Esophagus muscularis mucosa (tissue), 4 donors: ENCODE measurements at regions of chr9 and their contacts with region 1.

Region 1: GRCh38 chr9:96299823-96300222 is 2.2 kb downstream of the HSD17B3 start:
- DNase-seq: no peak
- H3K4me3 ChIP-seq: no peak overlapping the region
- H3K27ac ChIP-seq: no peak overlapping the region
- H3K4me1 ChIP-seq: no peaks in the 10 kb centered on the region
- H3K27me3 ChIP-seq: no peaks in the 10 kb centered on the region
- CTCF ChIP-seq: no peak
- EP300 ChIP-seq: no peak
- POLR2A ChIP-seq: no peak

Region 2: GRCh38 chr9:96253059-96253696 is 46.6 kb before region 1 on chr9:
- intact Hi-C with region 1: loop called (anchors 5 kb)
- DNase-seq: no peak
- H3K4me3 ChIP-seq: no peak overlapping the region
- H3K27ac ChIP-seq: no peak overlapping the region
- H3K4me1 ChIP-seq: no peaks in the 10 kb centered on the region
- H3K27me3 ChIP-seq: no peaks in the 10 kb centered on the region
- CTCF ChIP-seq: no peak
- EP300 ChIP-seq: no peak
- POLR2A ChIP-seq: no peak